ENCODE measurements at regions of chrX and their contacts with region 1.

Region 1: DNA sequence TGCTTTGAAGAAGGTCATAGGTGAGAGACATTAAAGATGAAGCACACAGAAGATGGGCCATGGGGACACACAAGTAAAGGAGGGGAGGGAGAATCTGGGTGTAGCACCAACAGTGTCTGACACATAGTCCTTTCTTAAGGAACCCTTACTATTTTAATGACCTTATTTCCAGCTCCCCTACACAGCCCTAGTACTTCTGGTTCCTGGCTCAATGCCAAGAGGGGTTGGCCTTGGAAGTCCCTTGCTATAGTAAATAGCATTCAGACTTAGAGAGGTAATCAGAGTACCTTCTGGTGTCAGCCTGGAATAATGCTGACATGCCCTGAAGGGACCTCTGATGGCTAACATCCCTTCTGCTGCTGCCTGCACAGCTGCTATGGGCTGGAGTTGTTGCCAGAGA is 25.8 kb upstream of the MAGEB2 start:
- DNase-seq: no peak

Region 2: GRCh38 chrX:28586981-28587551 is 1602.5 kb before region 1 on chrX and contains the start of gene IL1RAPL1:
- intact Hi-C with region 1: loop called in 1 of 2 experiments (anchors 5 kb)
- DNase-seq: no peak
- total RNA-seq, gene IL1RAPL1: 0.10 TPM in 1 of 2 donors, not detected in the other

Measured in posterior vena cava (tissue), 2 donors.